ENCODE measurements at regions of chr3 and their contacts with region 1.

Region 1: DNA sequence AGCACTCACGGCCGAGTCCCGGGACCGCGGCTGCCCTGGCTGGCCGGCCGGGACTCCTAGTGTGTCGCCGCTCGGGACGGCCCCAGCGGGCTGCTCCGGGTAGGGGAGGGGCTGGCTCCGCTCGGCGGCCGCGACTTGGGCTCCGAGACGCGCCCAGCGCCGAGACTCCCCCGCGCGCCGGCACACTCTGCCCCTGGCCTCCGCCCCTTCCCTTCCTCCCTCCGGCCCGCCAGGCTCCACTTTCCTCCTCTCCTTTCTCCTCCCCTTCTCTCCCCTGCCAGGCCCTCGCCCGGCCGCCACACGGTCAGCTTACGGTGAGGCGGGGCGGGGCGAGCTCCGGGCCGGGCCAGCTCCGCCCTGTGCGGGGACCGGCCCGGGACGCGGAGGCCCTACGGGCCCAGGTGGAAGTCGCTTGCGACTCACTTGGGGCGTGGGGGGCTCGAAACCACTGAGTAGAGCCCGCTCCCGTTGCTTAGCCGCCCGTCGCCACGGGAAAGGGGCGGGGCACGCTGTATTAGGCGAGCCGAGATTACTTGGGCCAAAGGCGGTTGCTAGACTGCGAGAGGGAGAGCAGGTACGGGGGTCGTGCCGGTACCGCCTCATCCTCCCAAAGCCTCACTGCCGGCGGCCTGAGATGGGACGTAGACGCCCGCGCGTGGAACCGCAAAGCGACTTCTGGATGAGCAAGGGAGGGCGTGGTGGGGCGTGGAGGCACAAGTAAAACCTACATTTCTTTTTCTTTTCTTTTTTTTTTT is at the start of gene ITGB5:
- DNase-seq: peak; percentile 91 to 95
- ATAC-seq: peak; percentile 88
- H3K4me3 ChIP-seq: peak within 1 kb of the TSS; percentile 60 to 78
- H3K27ac ChIP-seq: peak within 1 kb of the TSS; percentile 73 to 84
- H3K4me1 ChIP-seq: peaks cover under 1 to 3% of the 10 kb centered on the region in 2 donors
- H3K27me3 ChIP-seq: no peaks in the 10 kb centered on the region
- total RNA-seq, gene ITGB5: 332 to 369 TPM

Region 2: DNA sequence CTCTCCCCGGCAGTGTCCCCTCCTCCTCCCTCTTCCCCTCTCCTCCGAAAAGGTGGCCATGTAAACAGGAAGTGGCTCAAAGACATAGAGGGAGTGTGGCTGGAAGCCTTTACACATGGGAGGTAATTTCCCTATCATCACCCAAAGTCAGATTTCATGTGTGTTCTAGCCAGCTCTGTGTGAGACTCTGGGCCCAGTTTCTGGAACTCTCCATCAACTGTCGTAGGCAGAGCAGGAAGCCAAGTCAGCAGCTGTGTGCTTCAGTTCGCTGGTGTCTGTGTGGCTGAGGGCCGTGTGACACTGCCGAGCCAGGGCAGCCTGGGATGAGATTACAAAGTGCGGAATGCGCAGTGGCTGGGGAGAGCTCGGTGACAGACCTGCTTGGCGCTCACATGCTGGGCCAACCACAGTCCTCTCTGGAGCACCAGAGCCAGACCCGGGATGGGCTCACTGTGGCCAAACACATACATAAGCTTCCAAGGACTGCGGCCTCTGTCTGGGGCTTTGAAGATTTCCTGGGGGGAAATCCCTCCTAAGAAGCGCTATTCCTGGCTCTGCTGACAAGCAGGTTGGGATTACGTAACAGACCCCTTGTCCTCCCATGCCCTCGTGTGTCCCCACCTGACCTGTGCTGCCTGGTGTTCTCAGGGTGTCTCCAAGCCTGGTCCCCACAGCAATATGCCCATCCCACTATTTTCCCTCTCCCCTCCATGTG is 106.4 kb before region 1 on chr3:
- intact Hi-C with region 1: loop called (anchors 5 kb)
- DNase-seq: peak; percentile 86 to 89
- ATAC-seq: peak; percentile 84
- H3K4me3 ChIP-seq: no peak overlapping the region
- H3K27ac ChIP-seq: peak overlapping the region; percentile 71 to 99
- H3K4me1 ChIP-seq: peaks cover 0 to 2% of the 10 kb centered on the region in 2 donors
- H3K27me3 ChIP-seq: no peaks in the 10 kb centered on the region

Region 3: GRCh38 chr3:124845406-124845805 is 41.9 kb before region 1 on chr3:
- intact Hi-C with region 1: loop called (anchors 5 kb)
- DNase-seq: peak in 1 of 2 donors; percentile 76
- ATAC-seq: peak; percentile 82
- H3K4me3 ChIP-seq: no peak overlapping the region
- H3K27ac ChIP-seq: peak overlapping the region; percentile 31 to 90
- H3K4me1 ChIP-seq: peaks cover 2 to 13% of the 10 kb centered on the region in 2 donors
- H3K27me3 ChIP-seq: no peaks in the 10 kb centered on the region

Region 4: GRCh38 chr3:125003369-125003853 is 116.1 kb after region 1 on chr3:
- intact Hi-C with region 1: no loop called
- DNase-seq: no peak
- ATAC-seq: peak; percentile 72
- H3K4me3 ChIP-seq: no peak overlapping the region
- H3K27ac ChIP-seq: no peak overlapping the region
- H3K4me1 ChIP-seq: no peaks in the 10 kb centered on the region
- H3K27me3 ChIP-seq: no peaks in the 10 kb centered on the region

Region 5: GRCh38 chr3:125322166-125322565 is 434.8 kb after region 1 on chr3:
- intact Hi-C with region 1: no loop called
- DNase-seq: no peak
- ATAC-seq: no peak
- H3K4me3 ChIP-seq: no peak overlapping the region
- H3K27ac ChIP-seq: no peak overlapping the region
- H3K4me1 ChIP-seq: peaks cover 0 to 3% of the 10 kb centered on the region in 2 donors
- H3K27me3 ChIP-seq: no peaks in the 10 kb centered on the region